ENCODE measurements at regions of chr22 and their contacts with region 1.

Region 1: DNA sequence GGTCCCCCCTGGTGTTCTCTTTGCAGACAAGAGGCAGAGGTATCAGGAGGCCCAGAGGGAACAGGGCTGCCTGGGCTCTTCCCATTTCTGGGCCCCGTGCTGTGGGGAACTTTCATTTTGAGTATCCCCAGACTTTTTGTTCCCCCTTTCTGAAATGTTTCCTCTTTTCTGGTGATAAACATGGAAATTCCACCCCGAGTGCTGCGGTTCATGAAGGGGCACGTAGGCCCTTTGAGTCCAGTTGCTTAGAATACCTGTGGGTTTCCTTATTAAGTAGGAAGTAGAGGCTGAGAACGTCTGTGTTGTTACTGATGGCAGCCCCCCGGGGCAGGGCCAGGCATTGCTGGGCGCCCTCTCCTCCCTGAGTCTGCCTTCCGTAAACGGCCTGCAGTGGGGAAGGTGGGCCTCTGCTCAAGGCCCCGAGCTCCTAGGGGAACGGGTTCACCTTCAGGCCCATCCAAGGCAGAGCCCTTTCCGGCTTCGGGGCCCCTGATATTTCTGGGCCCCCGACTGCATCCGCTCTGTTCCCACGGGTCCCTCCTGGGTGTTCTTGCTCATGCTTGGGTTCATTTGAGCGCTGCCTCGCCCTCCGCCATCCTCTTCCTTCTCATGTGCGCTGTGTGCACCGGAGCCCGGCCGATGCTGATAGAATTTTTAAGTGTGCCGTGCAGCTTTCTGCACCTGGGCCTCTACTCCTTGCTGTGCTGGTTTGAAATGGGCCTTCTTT is 12.0 kb downstream of the TBC1D22A start:
- H3K4me3 Mint-ChIP-seq: peak overlapping the region; percentile 63
- H3K27ac Mint-ChIP-seq: peak overlapping the region; percentile 83
- H3K4me1 Mint-ChIP-seq: peaks cover 79% of the 10 kb centered on the region
- H3K27me3 Mint-ChIP-seq: no peaks in the 10 kb centered on the region

Region 2: DNA sequence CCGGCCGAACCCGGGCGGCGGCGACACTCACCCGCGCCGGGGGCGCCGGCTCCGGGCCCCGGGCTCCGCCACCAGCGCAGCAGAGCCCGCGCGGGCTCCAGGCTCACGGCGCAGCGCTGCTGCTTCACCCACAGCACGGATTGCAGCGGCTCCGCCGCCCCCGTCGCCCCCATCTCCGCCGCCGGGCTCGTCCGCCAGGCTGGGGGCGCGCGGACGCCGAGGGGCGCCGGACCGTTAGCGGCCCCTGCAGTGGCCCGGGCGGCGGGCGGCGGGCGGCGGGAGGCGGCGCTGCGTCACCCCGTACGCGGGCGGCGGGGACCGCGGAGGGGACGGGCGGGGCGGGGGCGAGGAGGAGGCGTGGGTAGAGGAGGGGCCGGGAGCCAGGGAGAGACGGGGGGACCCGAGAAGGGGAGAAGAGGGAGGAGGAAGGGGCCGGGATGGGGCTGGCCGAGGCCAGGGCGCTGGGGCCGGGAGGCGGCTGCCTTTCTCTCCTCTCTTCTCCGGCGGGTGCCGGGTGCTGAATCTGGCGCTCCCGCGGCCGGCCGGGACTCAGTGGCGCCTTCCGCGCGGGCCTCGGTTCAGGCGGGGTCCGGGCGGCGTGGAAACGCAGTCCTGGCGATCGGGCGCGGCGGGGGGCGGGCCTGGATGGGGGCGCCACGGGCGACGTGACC is 36.3 kb before region 1 on chr22 and contains the start of gene CERK:
- intact Hi-C with region 1: loop called (anchors 5 kb)
- H3K4me3 Mint-ChIP-seq: peak within 1 kb of the TSS; percentile 97
- H3K27ac Mint-ChIP-seq: peak within 1 kb of the TSS; percentile 92
- H3K4me1 Mint-ChIP-seq: peaks cover 70% of the 10 kb centered on the region
- H3K27me3 Mint-ChIP-seq: no peaks in the 10 kb centered on the region